PC-9 (cell line): ENCODE measurements at regions of chr22 and their contacts with region 1.

Region 1: DNA sequence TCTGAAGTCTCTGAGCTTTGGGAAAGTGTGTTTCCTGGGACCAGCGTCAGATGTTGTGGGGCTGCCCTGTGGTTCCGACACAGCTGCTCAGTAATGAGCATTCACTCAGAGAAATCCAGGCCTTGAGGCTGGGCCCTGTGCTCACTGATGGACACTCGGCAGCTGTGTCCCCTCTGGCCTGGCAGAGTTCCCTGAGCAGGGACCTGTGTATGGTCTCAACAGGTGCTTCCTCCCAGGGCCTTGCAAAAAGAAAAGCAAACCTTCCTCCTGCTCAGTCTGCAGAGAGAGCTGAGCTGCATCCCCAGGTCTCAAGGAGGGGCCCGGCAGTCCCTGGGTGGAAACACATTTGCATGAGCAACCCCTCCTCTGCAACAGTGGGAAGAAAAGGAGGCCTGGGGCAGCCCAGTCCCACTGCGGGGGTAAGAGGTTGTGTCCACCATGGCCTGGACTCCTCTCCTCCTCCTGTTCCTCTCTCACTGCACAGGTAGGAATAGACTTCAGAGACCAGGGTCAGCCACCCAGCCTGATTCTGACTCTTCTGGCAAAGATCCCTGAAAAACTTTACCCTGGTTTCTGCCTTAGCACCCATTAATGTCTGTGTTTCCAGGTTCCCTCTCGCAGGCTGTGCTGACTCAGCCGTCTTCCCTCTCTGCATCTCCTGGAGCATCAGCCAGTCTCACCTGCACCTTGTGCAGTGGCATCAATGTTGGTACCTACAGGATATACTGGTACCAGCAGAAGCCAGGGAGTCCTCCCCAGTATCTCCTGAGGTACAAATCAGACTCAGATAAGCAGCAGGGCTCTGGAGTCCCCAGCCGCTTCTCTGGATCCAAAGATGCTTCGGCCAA is 131.2 kb downstream of the VPREB1 start:
- DNase-seq: no peak
- H3K4me3 ChIP-seq: no peak overlapping the region
- H3K27ac ChIP-seq: no peak overlapping the region
- H3K4me1 ChIP-seq: no peaks in the 10 kb centered on the region
- H3K27me3 ChIP-seq: peaks cover 46% of the 10 kb centered on the region
- CTCF ChIP-seq: no peak

Region 2: DNA sequence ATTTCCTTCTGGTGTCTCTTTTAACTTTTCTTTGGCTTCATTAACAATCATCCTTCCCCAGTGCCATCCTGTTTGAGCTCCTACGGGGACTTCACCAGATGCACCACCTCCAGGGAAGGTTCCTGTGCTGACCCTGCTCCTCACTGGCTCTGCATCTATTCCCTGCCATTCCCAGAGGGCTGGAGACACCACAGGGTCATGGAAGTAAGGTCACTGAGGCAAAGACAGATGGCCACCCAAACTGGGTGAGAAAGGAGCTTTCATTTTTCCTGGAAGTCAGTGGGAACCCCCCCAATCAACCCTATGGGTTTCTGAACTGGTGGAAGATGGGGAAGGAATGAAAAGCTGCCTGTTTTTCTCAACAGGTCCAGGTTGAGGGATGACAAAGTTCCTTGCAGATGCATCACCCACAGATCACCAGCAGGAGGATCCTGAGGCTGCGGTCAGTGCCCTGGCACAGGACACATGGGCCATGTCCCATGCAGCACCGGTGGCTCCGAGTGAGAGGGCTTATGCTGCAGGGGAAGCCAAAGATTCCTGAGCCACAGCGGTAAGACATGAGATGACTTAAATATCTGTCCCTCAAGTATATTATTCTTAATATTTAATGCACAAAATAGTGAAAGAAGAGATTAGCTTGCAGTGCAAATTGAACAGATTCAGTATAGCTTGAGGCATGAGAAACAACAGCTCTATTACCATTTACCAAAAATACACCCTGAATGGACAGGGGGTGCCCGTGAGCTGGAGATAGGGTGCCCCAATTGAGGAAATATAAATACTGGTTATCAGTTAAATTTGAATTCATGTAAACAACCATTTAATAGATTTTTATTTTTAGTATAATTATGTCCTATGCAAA is 204.2 kb before region 1 on chr22:
- CTCF ChIA-PET with region 1: interaction called, 11 read pairs
- POLR2A ChIA-PET with region 1: no interaction called
- intact Hi-C with region 1: no loop called
- DNase-seq: no peak
- H3K4me3 ChIP-seq: no peak overlapping the region
- H3K27ac ChIP-seq: no peak overlapping the region
- H3K4me1 ChIP-seq: no peaks in the 10 kb centered on the region
- H3K27me3 ChIP-seq: peaks cover 3% of the 10 kb centered on the region; the same call in 1 of the 2 replicates
- CTCF ChIP-seq: peak; percentile 57

Region 3: DNA sequence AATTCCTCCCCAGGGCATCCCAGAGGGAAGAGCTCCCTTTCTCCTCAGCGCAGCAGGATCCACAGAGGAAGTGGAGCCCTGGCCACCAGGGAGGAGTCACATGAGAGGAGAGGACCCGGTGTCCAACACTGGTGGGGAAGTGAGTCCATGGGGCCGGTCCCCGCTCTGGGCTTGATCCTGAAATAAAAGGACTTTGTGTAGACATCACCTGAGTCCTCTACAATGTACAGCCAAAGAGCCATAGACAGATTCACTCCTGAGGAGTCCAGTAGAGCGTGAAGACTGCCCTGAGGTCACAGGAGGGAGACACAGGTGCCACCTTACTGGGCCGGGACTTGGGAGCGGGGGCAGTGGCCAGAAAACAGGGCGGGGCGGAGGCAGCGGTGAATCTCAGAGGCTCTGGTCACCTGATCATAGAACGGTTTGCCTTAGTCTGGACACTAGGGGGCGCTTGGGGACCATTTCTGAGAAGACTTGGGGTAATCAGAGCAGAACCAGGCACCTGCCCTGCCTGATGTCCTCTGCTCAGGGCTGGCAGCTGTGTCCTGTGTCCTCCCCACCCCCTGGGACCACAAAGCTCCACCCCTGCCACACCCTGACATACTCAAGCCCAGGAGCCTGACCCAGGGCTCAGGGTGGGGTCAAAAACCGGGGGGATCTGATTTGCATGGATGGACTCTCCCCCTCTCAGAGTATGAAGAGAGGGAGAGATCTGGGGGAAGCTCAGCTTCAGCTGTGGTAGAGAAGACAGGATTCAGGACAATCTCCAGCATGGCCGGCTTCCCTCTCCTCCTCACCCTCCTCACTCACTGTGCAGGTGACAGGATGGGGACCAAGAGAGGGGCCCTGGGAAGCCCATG is 18.5 kb before region 1 on chr22:
- CTCF ChIA-PET with region 1: no interaction called
- POLR2A ChIA-PET with region 1: no interaction called
- intact Hi-C with region 1: loop called (anchors 2 kb)
- DNase-seq: peak; percentile 49 to 65
- H3K4me3 ChIP-seq: no peak overlapping the region
- H3K27ac ChIP-seq: no peak overlapping the region
- H3K4me1 ChIP-seq: no peaks in the 10 kb centered on the region
- H3K27me3 ChIP-seq: peaks cover 10% of the 10 kb centered on the region
- CTCF ChIP-seq: peak; percentile 66

Region 4: DNA sequence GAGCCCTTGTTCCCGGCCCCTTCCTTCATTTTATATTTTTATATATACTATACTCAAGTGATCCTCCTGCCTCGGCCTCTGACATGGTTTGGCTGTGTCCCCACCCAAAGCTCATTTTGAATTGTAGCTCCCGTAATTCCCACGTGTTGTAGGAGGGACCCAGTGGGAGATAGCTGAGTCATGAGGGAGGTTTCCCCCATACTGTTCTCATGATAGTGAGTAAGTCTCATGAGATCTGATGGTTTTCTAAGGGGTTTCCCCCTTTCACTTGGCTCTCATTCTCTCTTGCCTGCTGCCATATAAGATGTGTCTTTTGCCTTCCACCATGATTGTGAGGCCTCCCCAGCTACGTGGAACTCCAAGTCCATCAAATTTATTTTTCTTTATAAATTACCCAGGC is 151.5 kb after region 1 on chr22:
- CTCF ChIA-PET with region 1: no interaction called
- POLR2A ChIA-PET with region 1: no interaction called
- intact Hi-C with region 1: no loop called
- DNase-seq: no peak
- H3K4me3 ChIP-seq: no peak overlapping the region
- H3K27ac ChIP-seq: no peak overlapping the region
- H3K4me1 ChIP-seq: no peaks in the 10 kb centered on the region
- H3K27me3 ChIP-seq: peaks cover 34% of the 10 kb centered on the region
- CTCF ChIP-seq: no peak